ENCODE measurements at regions of chr13 and their contacts with region 1.

Region 1: GRCh38 chr13:62960723-62961122 is 1545.1 kb upstream of the PCDH20 start:
- DNase-seq: no peak
- H3K4me3 ChIP-seq: no peak overlapping the region
- H3K27ac ChIP-seq: no peak overlapping the region
- H3K4me1 ChIP-seq: no peaks in the 10 kb centered on the region
- H3K27me3 ChIP-seq: no peaks in the 10 kb centered on the region
- CTCF ChIP-seq: no peak
- POLR2A ChIP-seq: no peak

Region 2: GRCh38 chr13:62829486-62829885 is 131.2 kb before region 1 on chr13:
- intact Hi-C with region 1: no loop called
- DNase-seq: no peak
- H3K4me3 ChIP-seq: no peak overlapping the region
- H3K27ac ChIP-seq: no peak overlapping the region
- H3K4me1 ChIP-seq: no peaks in the 10 kb centered on the region
- H3K27me3 ChIP-seq: no peaks in the 10 kb centered on the region
- CTCF ChIP-seq: no peak
- POLR2A ChIP-seq: no peak

Region 3: DNA sequence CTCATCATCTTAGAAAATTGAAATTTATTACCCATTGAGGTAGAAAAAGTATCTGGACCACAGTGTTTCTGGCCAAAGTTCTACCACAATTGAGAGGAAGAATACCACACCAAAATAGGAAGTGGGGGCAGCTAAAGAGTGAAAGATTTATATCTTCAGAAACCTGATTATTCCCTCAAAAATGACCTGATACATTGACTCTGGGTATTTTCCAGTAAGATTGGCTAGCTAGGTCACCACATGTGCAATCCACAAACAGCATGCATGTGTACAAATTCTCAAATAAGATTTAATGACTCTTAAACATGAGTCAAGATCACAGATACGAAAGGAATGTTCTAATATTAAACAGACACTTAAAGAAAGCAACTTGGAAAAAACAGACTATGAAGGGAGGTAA is 28.9 kb before region 1 on chr13:
- intact Hi-C with region 1: loop called (anchors 2 kb)
- DNase-seq: no peak
- H3K4me3 ChIP-seq: no peak overlapping the region
- H3K27ac ChIP-seq: no peak overlapping the region
- H3K4me1 ChIP-seq: peaks cover 4% of the 10 kb centered on the region
- H3K27me3 ChIP-seq: no peaks in the 10 kb centered on the region
- CTCF ChIP-seq: no peak
- POLR2A ChIP-seq: no peak

Region 4: DNA sequence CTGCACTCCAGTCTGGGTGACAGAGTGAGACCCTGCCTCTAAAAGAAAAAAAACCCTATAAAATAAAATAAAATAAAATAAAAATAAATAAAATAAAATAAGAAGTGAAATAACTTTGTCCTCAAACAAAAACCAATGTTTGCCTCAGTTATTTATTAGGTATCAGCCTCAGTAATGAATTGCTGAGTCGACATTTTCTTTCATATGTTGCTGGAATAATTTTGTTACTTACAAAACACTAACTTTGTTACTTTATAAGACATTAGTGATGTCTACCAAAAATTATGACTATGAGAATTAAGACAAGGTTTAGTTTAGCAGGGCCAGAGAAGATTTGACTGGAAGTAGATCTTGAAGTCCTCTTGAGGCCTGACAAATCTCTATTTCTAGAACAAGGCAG is 529.4 kb after region 1 on chr13:
- intact Hi-C with region 1: no loop called
- DNase-seq: no peak
- H3K4me3 ChIP-seq: no peak overlapping the region
- H3K27ac ChIP-seq: no peak overlapping the region
- H3K4me1 ChIP-seq: no peaks in the 10 kb centered on the region
- H3K27me3 ChIP-seq: no peaks in the 10 kb centered on the region
- CTCF ChIP-seq: no peak
- POLR2A ChIP-seq: no peak